Activated CD4-positive, alpha-beta memory T cell treated with anti-CD3 and anti-CD28 coated beads, Interleukin-2, amount 10 ng/mL, durations not matched to agents 7 days and 5 days (primary cell): ENCODE measurements at regions of chr15 and their contacts with region 1.

Region 1: GRCh38 chr15:101269479-101270223 is 7.6 kb downstream of the SELENOS start:
- DNase-seq: no peak
- H3K4me3 Mint-ChIP-seq: no peak overlapping the region
- H3K27ac Mint-ChIP-seq: no peak overlapping the region
- H3K4me1 Mint-ChIP-seq: peaks cover 8% of the 10 kb centered on the region
- H3K27me3 Mint-ChIP-seq: no peaks in the 10 kb centered on the region

Region 2: GRCh38 chr15:101014921-101015841 is 254.5 kb before region 1 on chr15:
- CTCF ChIA-PET with region 1: interaction called, 11 read pairs
- POLR2A ChIA-PET with region 1: no interaction called
- DNase-seq: peak; percentile 74
- H3K4me3 Mint-ChIP-seq: no peak overlapping the region
- H3K27ac Mint-ChIP-seq: no peak overlapping the region
- H3K4me1 Mint-ChIP-seq: no peaks in the 10 kb centered on the region
- H3K27me3 Mint-ChIP-seq: peaks cover 6% of the 10 kb centered on the region

Region 3: GRCh38 chr15:101391981-101392640 is 122.5 kb after region 1 on chr15:
- CTCF ChIA-PET with region 1: no interaction called
- POLR2A ChIA-PET with region 1: no interaction called
- DNase-seq: no peak
- H3K4me3 Mint-ChIP-seq: no peak overlapping the region
- H3K27ac Mint-ChIP-seq: no peak overlapping the region
- H3K4me1 Mint-ChIP-seq: no peaks in the 10 kb centered on the region
- H3K27me3 Mint-ChIP-seq: peaks cover 7% of the 10 kb centered on the region